Right ventricle myocardium inferior (tissue), 1 donor: ENCODE measurements at regions of chr1 and their contacts with region 1.

Region 1: GRCh38 chr1:8702850-8703810 is 114.3 kb downstream of the RERE start:
- DNase-seq: peak; percentile 95
- ATAC-seq: peak; percentile 96

Region 2: GRCh38 chr1:8382051-8382505 is 321.1 kb before region 1 on chr1:
- intact Hi-C with region 1: loop called (anchors 10 kb)
- DNase-seq: no peak
- ATAC-seq: peak; percentile 32

Region 3: GRCh38 chr1:8660411-8660828 is 42.7 kb before region 1 on chr1:
- intact Hi-C with region 1: loop called (anchors 5 kb)
- DNase-seq: peak; percentile 59
- ATAC-seq: peak; percentile 87